Activated T-helper 1 cell treated with anti-CD3 and anti-CD28 coated beads, Interleukin-12 subunit alpha, Interleukin-12 subunit beta, Interleukin-2, Interleukin-4 antibody, amounts not matched to agents 30 ng/mL and 10 ng/mL and 1 ng/mL, durations not matched to agents 14 hours and 24 hours and 36 hours (primary cell): ENCODE measurements at regions of chr19 and their contacts with region 1.

Region 1: DNA sequence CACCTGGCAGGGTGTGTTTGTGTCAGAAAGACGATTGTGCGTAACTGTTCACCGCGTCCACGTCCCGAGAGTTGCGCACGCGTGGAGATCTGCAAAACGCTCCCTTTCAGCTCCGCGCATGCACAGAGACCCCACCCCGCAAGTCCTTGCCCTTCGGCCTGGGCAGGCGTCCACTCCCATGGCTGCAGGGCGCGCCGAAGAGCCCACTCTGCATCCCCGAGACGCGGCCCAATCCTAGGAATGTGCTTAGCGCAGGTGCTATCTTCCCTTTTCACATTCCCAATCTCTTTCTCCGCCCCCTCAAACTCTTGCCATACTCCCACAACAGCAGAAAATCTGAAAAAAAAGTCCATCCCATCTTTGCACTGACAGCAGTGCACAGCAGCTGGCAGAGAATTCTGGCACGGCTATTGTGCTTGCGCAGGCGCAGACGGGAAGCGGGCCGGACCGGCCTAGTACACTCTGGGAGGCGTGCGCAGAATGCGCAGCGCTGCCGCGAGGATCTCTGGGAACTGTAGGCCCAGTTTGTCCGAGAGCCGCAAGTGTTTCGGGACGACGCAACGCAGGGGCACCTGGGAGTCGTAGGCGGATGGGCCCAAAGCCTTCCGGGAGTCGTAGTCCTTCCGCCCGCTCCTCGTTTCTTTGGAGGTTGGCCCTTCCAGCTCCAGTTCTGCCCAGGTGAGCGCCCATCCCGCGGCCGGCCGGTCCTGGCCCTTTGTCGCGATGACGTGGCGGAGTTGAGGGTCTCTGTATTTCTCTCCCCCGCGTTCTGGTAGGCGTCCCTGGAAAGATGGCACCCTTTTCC is 23.1 kb downstream of the ZNF175 start:
- DNase-seq: peak; percentile 95
- H3K4me3 Mint-ChIP-seq: peak overlapping the region; percentile 92
- H3K27ac Mint-ChIP-seq: peak overlapping the region; percentile 78
- H3K4me1 Mint-ChIP-seq: peaks cover 20% of the 10 kb centered on the region
- H3K27me3 Mint-ChIP-seq: no peaks in the 10 kb centered on the region

Region 2: GRCh38 chr19:51367565-51368365 is 226.4 kb before region 1 on chr19:
- intact Hi-C with region 1: loop called (anchors 1 kb)
- DNase-seq: peak; percentile 95
- H3K4me3 Mint-ChIP-seq: peak overlapping the region; percentile 98
- H3K27ac Mint-ChIP-seq: peak overlapping the region; percentile 96
- H3K4me1 Mint-ChIP-seq: peaks cover 68% of the 10 kb centered on the region
- H3K27me3 Mint-ChIP-seq: no peaks in the 10 kb centered on the region

Region 3: DNA sequence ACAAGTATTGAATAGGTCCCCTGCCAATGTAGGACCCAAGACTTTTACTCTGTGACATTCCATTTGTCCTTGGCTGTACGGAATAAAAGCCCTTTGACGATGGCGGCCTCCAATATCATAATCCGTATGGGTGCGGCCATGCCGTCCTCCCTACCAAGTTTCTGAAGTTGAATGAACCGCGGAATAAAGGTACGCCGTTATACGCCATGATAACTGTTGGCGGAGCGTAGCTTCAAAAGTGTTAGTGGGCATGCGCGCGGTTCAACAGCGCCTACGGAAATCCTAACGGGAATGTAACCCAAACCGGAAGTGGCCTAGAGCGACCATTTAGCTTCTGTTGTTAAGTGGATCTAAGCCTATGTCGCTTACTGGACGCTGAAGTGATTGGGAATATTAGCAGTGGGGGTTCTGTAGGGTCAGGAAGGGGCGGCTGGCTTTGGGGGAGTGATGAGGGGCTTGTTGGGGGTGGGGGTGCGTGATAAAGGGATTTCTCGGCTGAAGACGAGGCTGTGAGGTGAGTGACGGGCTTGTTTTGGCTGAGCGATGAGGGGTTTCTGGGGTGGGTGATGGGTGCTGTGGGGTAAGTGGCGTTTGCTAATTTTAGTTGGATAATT is 23.1 kb before region 1 on chr19 and contains the start of gene ZNF175:
- intact Hi-C with region 1: loop called (anchors 1 kb)
- DNase-seq: peak; percentile 62
- H3K4me3 Mint-ChIP-seq: peak within 1 kb of the TSS; percentile 99
- H3K27ac Mint-ChIP-seq: peak within 1 kb of the TSS; percentile 81
- H3K4me1 Mint-ChIP-seq: peaks cover 23% of the 10 kb centered on the region
- H3K27me3 Mint-ChIP-seq: peaks cover 14% of the 10 kb centered on the region
- total RNA-seq, gene ZNF175: 7.9 and 8.4 TPM in 2 replicates

Region 4: DNA sequence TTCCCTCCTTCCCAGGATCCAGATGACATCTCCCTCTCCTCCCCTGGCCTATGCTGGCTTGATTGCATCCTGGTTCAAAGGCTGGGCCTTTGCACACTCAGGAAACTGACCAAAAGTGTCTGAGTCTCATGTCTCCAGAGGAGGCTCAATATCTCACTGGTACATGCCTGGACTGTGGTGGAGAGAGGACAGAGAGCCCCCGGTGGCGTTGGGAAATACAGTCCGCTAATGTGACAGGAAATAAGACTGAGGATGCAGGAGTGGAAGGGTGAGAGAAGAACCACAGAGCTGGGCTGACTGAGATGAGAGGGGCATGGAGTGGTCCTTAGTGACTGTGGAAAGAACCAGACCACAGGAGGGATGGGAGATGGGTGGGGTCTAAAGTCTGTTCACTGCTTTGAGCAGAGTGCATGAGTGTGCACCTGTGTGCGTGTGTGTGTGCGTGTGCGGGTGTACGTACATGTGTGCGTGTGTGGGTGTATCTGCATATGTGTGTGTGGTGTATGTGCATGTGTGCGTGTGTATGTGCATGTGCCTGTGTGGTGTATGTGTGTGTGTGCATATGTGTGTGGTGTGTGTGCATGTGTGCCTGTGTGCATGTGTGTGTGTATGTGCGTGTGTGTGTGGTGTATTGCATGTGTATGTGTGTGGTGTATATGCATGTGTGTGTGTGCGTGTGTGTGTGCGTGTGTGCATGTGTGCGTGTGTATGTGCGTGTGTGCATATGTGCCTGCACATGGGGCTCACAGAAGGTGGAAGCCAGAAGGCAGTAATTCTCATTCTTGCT is 34.2 kb after region 1 on chr19:
- intact Hi-C with region 1: no loop called
- DNase-seq: no peak
- H3K4me3 Mint-ChIP-seq: no peak overlapping the region
- H3K27ac Mint-ChIP-seq: no peak overlapping the region
- H3K4me1 Mint-ChIP-seq: no peaks in the 10 kb centered on the region
- H3K27me3 Mint-ChIP-seq: peaks cover 10% of the 10 kb centered on the region

Region 5: GRCh38 chr19:51703575-51704515 is 109.7 kb after region 1 on chr19:
- intact Hi-C with region 1: loop called (anchors 2 kb)
- DNase-seq: peak; percentile 95
- H3K4me3 Mint-ChIP-seq: peak overlapping the region; percentile 87
- H3K27ac Mint-ChIP-seq: peak overlapping the region; percentile 89
- H3K4me1 Mint-ChIP-seq: peaks cover 30% of the 10 kb centered on the region
- H3K27me3 Mint-ChIP-seq: peaks cover 3% of the 10 kb centered on the region

Region 6: GRCh38 chr19:51959791-51960190 is 365.6 kb after region 1 on chr19:
- intact Hi-C with region 1: no loop called
- DNase-seq: no peak
- H3K4me3 Mint-ChIP-seq: no peak overlapping the region
- H3K27ac Mint-ChIP-seq: no peak overlapping the region
- H3K4me1 Mint-ChIP-seq: no peaks in the 10 kb centered on the region
- H3K27me3 Mint-ChIP-seq: no peaks in the 10 kb centered on the region